Tibial artery (tissue), 4 donors: ENCODE measurements at regions of chr2 and their contacts with region 1.

Region 1: DNA sequence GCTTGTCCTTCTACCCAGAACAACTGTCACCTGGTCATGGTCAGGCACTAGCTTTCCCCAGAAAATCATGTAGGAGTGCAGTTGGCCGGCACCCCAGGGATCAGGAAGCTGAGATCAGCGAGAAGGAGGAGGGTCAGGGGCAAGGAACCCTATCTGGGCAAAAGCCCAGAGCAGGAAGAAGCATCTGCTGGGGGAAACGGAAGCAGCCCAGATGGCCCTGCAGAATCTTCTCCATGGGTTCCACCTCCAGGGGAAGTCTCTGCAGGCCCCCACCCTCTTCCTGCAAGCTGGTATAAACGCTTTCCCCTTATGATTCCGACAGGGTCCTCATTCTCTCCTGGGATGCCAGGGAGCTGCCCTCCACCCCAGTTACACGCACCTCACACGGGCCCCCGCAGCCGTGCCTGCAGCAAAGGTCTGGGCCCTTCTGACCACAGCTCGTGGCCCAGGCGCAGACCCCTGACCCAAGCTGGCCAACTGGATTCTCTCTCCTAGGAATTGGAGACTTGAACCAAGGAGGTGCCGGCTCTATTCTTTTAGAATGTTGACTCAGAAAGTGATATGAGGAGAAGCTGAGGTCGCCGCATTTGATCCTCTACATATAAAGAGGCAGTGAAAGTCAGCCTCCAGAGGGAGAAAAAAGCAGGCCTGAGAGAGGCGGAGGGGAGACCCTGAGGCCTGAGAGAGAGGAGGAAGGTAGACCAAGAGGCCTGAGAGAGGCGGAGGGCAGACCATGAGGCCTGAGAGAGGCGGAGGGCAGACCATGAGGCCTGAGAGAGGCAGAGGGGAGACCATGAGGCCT is 71.0 kb downstream of the STPG4 start:
- DNase-seq: peak in 1 of 2 donors; percentile 74
- H3K4me3 ChIP-seq: no peak overlapping the region
- H3K27ac ChIP-seq: no peak overlapping the region
- H3K4me1 ChIP-seq: peaks cover 4 to 50% (median 29%) of the 10 kb centered on the region in 4 donors
- H3K27me3 ChIP-seq: no peaks in the 10 kb centered on the region
- CTCF ChIP-seq: no peak

Region 2: DNA sequence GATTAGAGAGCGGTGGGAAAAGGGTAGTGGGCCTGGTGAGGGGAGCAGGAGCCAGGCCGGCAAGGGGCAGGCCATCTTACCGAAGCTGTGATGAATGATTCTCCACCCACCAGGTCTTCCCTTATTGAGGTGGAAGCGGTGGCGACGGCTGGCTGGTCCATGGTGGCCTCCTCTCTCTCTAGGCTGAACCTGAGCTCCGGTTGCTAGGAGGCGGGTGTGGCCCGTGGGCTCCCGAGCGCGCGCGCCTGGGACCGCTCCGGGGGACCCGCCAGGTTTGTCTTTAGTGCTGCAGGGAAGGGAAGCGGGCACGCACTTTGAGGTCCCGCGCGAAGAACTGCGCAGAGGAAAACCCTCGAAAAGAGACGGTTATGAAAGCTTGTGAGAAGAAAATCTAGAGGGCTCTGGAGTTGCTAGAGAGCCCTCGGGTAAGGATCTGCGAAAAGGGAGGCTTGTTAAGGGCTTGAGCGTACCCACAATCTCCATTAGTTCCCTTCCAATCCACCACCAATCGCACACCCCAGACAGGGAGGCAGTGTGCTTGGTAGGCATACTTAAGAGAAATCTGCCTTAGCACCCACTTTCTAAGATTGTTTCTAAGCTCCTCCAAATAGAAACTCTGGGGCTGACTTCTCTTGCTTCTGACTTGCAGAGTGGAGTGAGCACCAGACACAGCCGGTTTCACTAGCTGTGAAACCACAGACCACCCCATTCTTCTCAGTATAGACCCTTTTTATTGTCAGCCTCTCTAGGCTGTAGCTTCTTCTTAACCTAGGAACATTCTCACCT is 71.2 kb after region 1 on chr2 and contains the start of gene STPG4:
- intact Hi-C with region 1: loop called (anchors 5 kb)
- DNase-seq: no peak
- H3K4me3 ChIP-seq: no peak within 1 kb of the TSS
- H3K27ac ChIP-seq: no peak within 1 kb of the TSS
- H3K4me1 ChIP-seq: no peaks in the 10 kb centered on the region
- H3K27me3 ChIP-seq: no peaks in the 10 kb centered on the region
- CTCF ChIP-seq: no peak